Mammary epithelial cell (primary cell): ENCODE measurements at regions of chr19 and their contacts with region 1.

Region 1: DNA sequence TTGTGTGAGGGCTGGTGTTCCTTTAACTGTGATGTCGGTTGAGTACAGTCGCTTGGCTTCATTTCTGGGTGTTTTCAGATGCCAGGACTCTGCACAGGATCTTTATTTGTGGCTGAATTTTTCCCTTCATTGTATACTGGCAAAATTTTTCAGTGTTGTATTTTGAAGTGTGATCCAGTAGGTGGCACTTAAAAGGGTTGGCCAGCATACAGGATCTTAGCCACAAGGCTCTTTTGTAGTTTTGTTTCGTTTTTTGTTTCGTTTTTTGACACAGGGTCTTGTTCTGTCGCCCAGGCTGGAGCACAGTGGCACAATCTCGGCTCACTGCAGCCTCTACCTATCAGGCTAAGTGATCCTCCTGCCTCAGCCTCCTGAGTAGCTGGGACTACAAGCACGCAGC is 8.7 kb downstream of the FCAR start:
- DNase-seq: no peak
- H3K4me3 ChIP-seq: no peak overlapping the region
- H3K27ac ChIP-seq: no peak overlapping the region
- H3K4me1 ChIP-seq: no peaks in the 10 kb centered on the region
- H3K27me3 ChIP-seq: no peaks in the 10 kb centered on the region
- CTCF ChIP-seq: no peak

Region 2: DNA sequence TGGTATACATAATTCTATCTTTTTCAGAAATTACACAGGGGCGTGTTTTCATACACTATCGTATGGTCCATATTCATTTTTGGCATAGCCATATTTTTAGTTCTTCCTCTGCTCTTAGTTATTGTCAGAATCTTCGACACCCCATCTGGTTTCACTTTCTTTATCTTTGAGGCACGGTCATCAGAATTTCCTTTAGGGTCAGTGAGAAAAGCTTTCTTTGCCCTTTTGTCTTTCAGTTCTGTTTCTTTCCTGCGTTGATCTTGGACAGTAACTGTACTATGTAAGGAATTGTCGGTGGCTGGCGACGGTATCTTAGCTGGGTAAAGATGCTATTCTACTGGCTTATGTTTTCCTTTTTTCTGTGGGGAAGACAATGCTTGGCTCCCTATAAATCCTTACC is 89.9 kb before region 1 on chr19:
- CTCF ChIA-PET with region 1: no interaction called
- dilution Hi-C with region 1: loop called (anchors 10 kb)
- in situ Hi-C with region 1: no loop called
- intact Hi-C with region 1: no loop called
- DNase-seq: no peak
- H3K4me3 ChIP-seq: no peak overlapping the region
- H3K27ac ChIP-seq: no peak overlapping the region
- H3K4me1 ChIP-seq: no peaks in the 10 kb centered on the region
- H3K27me3 ChIP-seq: no peaks in the 10 kb centered on the region
- CTCF ChIP-seq: no peak

Region 3: GRCh38 chr19:54905803-54906511 is 23.2 kb after region 1 on chr19 and contains the start of gene NCR1:
- CTCF ChIA-PET with region 1: no interaction called
- dilution Hi-C with region 1: no loop called
- in situ Hi-C with region 1: no loop called
- intact Hi-C with region 1: no loop called
- DNase-seq: no peak
- H3K4me3 ChIP-seq: no peak within 1 kb of the TSS
- H3K27ac ChIP-seq: no peak within 1 kb of the TSS
- H3K4me1 ChIP-seq: no peaks in the 10 kb centered on the region
- H3K27me3 ChIP-seq: no peaks in the 10 kb centered on the region
- CTCF ChIP-seq: no peak
- total RNA-seq, gene NCR1: not detected

Region 4: DNA sequence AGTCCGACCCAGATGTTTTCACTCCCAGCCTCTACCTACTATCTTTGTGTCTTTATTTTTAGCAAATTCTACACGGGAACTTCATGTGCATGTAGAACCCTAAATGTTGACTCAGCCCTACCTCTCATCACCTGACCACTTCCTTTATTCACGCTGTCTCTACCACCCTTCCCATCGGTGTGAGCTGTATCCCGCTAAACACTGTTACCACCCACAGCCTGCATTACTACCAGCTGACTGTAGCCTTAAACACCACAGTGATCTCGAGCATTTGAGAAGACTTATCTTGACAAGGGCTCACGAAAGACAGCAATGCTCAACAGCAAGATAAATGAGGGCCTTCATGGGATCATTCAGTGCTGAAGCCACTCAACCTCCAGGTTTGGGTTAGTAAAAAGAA is 38.3 kb after region 1 on chr19:
- CTCF ChIA-PET with region 1: no interaction called
- dilution Hi-C with region 1: no loop called
- in situ Hi-C with region 1: no loop called
- intact Hi-C with region 1: loop called (anchors 2 kb)
- DNase-seq: no peak
- H3K4me3 ChIP-seq: no peak overlapping the region
- H3K27ac ChIP-seq: no peak overlapping the region
- H3K4me1 ChIP-seq: no peaks in the 10 kb centered on the region
- H3K27me3 ChIP-seq: no peaks in the 10 kb centered on the region
- CTCF ChIP-seq: no peak

Region 5: DNA sequence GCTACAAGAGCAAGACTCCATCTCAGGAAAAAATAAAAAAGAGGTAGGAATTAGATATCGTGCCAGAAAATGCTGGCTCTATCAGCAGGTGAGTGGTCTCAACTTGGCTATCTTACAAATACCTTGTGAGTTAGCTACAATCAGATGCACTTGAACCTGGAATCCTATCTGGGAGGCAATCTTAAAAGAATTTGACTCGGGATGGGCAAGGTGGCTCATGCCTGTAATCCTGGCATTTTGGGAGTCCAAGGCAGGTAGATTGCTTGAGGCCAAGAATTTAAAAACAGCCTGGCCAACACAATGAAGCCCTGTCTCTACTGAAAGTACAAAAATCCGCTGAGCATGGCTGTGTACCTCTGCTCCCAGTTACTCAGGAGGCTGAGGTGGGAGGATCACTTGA is 112.8 kb after region 1 on chr19:
- CTCF ChIA-PET with region 1: no interaction called
- dilution Hi-C with region 1: loop called (anchors 10 kb)
- in situ Hi-C with region 1: no loop called
- intact Hi-C with region 1: no loop called
- DNase-seq: no peak
- H3K4me3 ChIP-seq: no peak overlapping the region
- H3K27ac ChIP-seq: no peak overlapping the region
- H3K4me1 ChIP-seq: no peaks in the 10 kb centered on the region
- H3K27me3 ChIP-seq: no peaks in the 10 kb centered on the region
- CTCF ChIP-seq: no peak

Region 6: GRCh38 chr19:55027472-55028337 is 144.9 kb after region 1 on chr19:
- CTCF ChIA-PET with region 1: no interaction called
- dilution Hi-C with region 1: no loop called
- in situ Hi-C with region 1: no loop called
- intact Hi-C with region 1: no loop called
- DNase-seq: no peak
- H3K4me3 ChIP-seq: no peak overlapping the region
- H3K27ac ChIP-seq: no peak overlapping the region
- H3K4me1 ChIP-seq: no peaks in the 10 kb centered on the region
- H3K27me3 ChIP-seq: no peaks in the 10 kb centered on the region
- CTCF ChIP-seq: no peak

Region 7: GRCh38 chr19:55160128-55160985 is 277.6 kb after region 1 on chr19:
- CTCF ChIA-PET with region 1: no interaction called
- dilution Hi-C with region 1: no loop called
- in situ Hi-C with region 1: no loop called
- intact Hi-C with region 1: loop called (anchors 5 kb)
- DNase-seq: peak; percentile 83
- H3K4me3 ChIP-seq: no peak overlapping the region
- H3K27ac ChIP-seq: no peak overlapping the region
- H3K4me1 ChIP-seq: peaks cover 18% of the 10 kb centered on the region
- H3K27me3 ChIP-seq: peaks cover 2% of the 10 kb centered on the region
- CTCF ChIP-seq: peak; percentile 86 to 97